ENCODE measurements at regions of chr6 and their contacts with region 1.

Region 1: DNA sequence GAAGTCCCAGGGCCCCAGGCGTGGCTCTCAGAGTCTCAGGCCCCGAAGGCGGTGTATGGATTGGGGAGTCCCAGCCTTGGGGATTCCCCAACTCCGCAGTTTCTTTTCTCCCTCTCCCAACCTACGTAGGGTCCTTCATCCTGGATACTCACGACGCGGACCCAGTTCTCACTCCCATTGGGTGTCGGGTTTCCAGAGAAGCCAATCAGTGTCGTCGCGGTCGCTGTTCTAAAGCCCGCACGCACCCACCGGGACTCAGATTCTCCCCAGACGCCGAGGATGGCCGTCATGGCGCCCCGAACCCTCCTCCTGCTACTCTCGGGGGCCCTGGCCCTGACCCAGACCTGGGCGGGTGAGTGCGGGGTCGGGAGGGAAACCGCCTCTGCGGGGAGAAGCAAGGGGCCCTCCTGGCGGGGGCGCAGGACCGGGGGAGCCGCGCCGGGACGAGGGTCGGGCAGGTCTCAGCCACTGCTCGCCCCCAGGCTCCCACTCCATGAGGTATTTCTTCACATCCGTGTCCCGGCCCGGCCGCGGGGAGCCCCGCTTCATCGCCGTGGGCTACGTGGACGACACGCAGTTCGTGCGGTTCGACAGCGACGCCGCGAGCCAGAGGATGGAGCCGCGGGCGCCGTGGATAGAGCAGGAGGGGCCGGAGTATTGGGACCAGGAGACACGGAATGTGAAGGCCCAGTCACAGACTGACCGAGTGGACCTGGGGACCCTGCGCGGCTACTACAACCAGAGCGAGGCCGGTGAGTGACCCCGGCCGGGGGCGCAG is at the start of gene HLA-A:
- DNase-seq: peak; percentile 98
- H3K4me3 ChIP-seq: peak within 1 kb of the TSS; percentile 48 to 76 (median 62)
- H3K27ac ChIP-seq: peak within 1 kb of the TSS; percentile 78 to 90 (median 88)
- H3K4me1 ChIP-seq: peaks cover 0 to 13% (median 2%) of the 10 kb centered on the region in 4 donors
- H3K27me3 ChIP-seq: no peaks in the 10 kb centered on the region
- CTCF ChIP-seq: no peak
- EP300 ChIP-seq: no peak
- POLR2A ChIP-seq: peak; percentile 91
- total RNA-seq, gene HLA-A: 279 to 524 (median 398) TPM

Region 2: DNA sequence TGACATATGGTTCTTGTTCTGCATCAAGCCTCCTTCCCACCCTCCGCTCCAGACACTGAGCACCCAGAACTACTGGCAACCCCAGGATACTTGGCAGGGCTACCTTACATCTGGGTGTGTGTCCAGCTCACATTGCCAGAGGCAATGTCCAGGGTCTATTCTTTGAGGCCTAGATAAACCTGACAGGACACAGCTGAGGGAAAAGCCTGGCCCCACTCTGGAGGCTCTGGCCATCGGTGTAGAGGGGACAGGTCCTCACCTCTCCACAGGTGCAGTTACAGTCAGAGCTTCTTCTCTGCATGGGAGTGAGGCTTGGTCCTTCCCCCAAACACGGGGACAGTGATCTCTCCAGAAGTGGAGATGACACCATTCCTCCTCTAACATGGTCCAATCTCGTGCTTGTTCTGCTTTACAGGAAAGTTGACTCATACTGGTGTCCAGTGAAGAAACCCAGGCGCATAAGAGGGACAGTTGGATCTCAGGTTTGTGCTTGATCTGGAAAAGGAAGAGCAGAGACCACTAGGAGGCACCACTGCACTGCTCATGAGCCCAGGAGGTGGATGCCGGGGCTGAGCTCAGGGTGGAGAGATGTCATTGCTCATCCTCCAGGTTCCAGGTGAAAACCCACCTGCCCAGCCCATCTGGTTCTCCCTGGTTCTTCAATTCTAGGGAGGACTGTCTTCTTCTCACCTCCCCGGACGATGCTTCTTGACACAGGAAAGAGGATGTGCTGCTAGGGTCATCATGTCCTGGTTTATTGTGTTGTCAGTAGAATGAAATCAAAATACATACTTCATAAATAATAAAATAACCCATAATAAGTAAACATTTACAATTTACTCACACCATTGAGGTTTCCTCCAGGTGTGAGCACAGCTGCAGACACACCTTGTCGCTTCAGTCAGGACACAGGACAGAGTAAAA is 204.5 kb before region 1 on chr6:
- intact Hi-C with region 1: loop called (anchors 10 kb)
- DNase-seq: peak; percentile 84
- H3K4me3 ChIP-seq: no peak overlapping the region
- H3K27ac ChIP-seq: no peak overlapping the region
- H3K4me1 ChIP-seq: no peaks in the 10 kb centered on the region
- H3K27me3 ChIP-seq: no peaks in the 10 kb centered on the region
- CTCF ChIP-seq: peak; percentile 60 to 76 (median 62)
- EP300 ChIP-seq: no peak
- POLR2A ChIP-seq: no peak

Region 3: DNA sequence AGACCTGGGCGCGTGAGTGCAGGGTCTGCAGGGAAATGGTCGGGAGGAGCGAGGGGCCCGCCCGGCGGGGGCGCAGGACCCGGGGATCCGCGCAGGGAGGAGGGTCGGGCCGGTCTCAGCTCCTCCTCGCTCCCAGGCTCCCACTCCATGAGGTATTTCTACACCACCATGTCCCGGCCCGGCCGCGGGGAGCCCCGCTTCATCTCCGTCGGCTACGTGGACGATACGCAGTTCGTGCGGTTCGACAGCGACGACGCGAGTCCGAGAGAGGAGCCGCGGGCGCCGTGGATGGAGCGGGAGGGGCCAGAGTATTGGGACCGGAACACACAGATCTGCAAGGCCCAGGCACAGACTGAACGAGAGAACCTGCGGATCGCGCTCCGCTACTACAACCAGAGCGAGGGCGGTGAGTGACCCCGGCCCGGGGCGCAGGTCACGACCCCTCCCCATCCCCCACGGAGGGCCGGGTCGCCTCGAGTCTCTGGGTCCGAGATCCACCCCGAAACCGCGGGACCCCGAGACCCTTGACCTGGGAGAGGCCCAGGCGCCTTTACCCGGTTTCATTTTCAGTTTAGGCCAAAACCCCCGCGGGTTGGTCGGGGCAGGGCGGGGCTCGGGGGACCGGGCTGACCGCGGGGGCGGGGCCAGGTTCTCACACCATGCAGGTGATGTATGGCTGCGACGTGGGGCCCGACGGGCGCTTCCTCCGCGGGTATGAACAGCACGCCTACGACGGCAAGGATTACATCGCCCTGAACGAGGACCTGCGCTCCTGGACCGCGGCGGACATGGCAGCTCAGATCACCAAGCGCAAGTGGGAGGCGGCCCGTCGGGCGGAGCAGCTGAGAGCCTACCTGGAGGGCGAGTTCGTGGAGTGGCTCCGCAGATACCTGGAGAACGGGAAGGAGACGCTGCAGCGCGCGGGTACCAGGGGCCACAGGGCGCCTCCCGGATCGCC is 54.4 kb before region 1 on chr6:
- intact Hi-C with region 1: loop called (anchors 1 kb)
- DNase-seq: peak; percentile 92
- H3K4me3 ChIP-seq: peak overlapping the region in 3 of 4 donors; percentile 45 to 62 (median 56)
- H3K27ac ChIP-seq: peak overlapping the region in 3 of 4 donors; percentile 84 to 91 (median 88)
- H3K4me1 ChIP-seq: peaks cover 0 to 3% (median 0%) of the 10 kb centered on the region in 4 donors
- H3K27me3 ChIP-seq: no peaks in the 10 kb centered on the region
- CTCF ChIP-seq: no peak
- EP300 ChIP-seq: no peak
- POLR2A ChIP-seq: no peak

Region 4: DNA sequence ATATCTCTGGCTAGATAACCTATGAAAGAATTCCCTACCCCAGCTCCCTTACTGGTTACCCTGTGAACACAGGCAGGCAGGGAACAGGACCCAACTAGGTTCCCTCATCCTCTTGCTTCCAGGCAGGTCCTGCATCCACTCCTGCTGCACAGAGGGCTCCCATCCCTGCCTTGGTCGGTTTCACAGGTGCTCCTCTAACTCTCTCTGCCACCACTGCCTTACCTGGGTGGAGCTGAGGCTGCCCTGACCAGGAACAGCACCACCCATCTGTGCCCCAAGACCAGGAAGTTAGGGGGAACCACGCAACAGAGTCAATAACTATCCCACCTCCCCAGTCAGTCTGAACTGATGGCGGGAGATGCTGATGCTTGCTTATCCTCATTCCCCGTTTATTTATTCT is 37.2 kb before region 1 on chr6:
- intact Hi-C with region 1: no loop called
- DNase-seq: no peak
- H3K4me3 ChIP-seq: no peak overlapping the region
- H3K27ac ChIP-seq: no peak overlapping the region
- H3K4me1 ChIP-seq: no peaks in the 10 kb centered on the region
- H3K27me3 ChIP-seq: no peaks in the 10 kb centered on the region
- CTCF ChIP-seq: no peak
- EP300 ChIP-seq: no peak
- POLR2A ChIP-seq: no peak

Region 5: DNA sequence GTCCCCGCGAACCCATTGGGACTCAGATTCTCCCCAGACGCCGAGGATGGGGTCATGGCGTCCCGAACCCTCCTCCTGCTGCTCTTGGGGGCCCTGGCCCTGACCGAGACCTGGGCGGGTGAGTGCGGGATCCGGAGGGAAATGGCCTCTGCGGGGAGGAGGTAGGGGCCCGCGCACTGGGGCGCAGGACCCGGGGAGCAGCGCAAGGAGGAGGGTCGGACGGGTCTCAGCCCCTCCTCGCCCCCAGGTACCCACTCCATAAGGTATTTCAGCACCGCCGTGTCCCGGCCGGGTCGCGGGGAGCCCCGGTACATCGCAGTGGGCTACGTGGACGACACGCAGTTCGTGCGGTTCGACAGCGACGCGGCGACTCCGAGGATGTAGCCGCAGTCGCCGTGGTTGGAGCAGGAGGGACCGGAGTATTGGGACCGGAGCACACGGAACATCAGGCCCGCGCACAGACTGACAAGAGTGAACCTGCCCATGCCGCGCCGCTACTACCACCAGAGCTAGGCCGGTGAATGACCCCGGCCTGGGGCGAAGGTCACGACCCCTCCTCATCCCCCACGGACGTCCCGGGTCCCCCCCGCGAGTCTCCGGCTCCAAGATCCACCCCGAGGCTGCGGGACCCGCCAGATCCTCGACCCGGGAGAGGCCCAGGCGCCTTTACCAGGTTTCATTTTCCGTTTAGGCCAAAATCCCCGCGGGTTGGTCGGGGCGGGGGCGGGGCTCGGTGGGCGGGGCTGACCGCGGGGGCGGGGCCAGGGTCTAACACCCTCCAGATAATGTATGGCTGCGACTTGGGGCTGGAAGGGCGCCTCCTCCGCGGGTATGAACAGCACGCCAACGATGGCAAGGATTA is 15.8 kb before region 1 on chr6:
- intact Hi-C with region 1: loop called (anchors 2 kb)
- DNase-seq: peak; percentile 81
- H3K4me3 ChIP-seq: peak overlapping the region in 3 of 4 donors; percentile 48 to 69 (median 53)
- H3K27ac ChIP-seq: peak overlapping the region in 3 of 4 donors; percentile 82 to 86 (median 84)
- H3K4me1 ChIP-seq: peaks cover 0 to 4% (median 0%) of the 10 kb centered on the region in 4 donors
- H3K27me3 ChIP-seq: no peaks in the 10 kb centered on the region
- CTCF ChIP-seq: no peak
- EP300 ChIP-seq: no peak
- POLR2A ChIP-seq: peak; percentile 9 to 39

Region 6: DNA sequence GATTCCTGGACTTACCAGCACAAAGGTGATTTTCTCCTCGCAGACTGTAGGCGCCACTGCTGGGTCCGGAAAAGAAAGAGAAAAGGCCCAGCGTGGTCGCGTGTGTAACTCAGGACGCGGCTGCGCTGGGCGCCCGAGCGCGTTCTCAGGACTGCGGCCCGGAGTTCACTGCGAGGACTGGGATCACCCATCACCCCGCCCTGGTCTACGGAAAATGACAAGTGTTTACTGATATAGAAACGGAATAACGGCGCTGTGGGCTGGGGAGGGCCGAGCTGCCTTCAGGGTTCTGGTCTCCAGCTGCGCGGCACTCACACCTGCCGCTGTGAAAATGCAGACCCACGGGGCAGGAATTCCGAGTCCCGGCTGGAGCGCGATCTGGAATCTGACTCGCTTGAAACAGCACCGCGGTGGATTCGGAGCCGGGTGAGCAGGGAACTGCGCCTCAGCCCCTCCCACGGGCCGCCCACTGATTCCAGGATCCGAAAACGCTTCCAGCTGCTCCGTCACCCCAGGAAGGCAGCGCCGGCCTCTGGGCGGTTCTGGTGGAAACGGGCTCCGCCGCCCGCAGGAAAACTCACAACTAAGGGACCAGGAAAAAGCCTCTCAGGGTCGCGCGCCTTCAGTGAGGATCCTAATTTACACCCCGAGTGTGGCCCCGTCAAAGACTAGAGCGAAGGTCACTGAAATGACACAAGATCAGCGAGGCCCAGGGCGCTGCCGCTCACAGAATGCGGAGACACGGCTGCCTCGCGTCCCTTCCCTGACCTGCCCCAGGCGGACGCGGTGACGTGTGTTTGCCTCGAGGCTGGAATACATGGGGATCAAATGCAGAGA is 34.3 kb after region 1 on chr6:
- intact Hi-C with region 1: loop called (anchors 1 kb)
- DNase-seq: peak; percentile 92
- H3K4me3 ChIP-seq: peak overlapping the region; percentile 26 to 58 (median 54)
- H3K27ac ChIP-seq: peak overlapping the region; percentile 89 to 97 (median 93)
- H3K4me1 ChIP-seq: peaks cover 0 to 27% (median 24%) of the 10 kb centered on the region in 4 donors
- H3K27me3 ChIP-seq: no peaks in the 10 kb centered on the region
- CTCF ChIP-seq: peak in 3 of 4 experiments; percentile 16 to 34 (median 18)
- EP300 ChIP-seq: no peak
- POLR2A ChIP-seq: peak; percentile 59 to 62

Region 7: DNA sequence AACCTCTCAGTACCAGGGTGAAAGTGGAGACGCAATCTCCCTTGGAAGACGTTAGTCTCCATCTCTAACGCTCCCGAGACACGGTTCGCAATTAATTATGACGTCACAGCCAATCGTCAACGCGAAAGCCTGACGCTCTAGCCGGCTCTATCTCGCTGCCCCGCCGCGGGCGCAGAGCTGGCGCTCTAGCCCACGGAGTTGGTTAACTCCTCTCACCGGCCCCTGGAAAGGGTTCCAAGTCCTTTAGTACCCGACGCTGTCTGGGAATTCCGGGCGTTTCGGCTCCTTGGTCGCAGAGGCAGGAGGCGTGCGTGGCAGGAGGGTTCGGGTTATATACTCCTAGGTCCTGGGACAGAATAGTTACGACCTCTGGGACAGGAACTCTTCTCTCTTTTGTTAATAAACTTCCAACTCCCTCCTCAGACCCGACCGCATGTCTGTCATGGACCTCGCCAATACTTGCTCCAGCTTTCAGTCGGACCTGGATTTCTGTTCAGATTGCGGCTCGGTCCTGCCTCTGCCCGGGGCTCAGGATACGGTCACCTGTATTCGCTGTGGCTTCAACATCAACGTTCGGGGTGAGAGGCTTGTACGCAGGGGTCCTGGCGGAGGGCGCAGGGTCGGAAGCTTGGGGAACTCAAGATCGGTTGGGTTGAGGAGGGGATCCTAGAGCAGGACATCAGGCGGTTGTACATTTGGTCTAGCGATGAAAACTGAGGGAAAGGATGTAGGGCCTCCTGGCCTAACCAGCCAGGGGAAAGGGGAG is 118.8 kb after region 1 on chr6 and contains the start of gene POLR1H:
- intact Hi-C with region 1: loop called (anchors 5 kb)
- DNase-seq: peak; percentile 97
- H3K4me3 ChIP-seq: peak within 1 kb of the TSS; percentile 71 to 91 (median 84)
- H3K27ac ChIP-seq: peak within 1 kb of the TSS; percentile 85 to 94 (median 89)
- H3K4me1 ChIP-seq: peaks cover 0 to 32% (median 30%) of the 10 kb centered on the region in 4 donors
- H3K27me3 ChIP-seq: no peaks in the 10 kb centered on the region
- CTCF ChIP-seq: no peak
- EP300 ChIP-seq: no peak
- POLR2A ChIP-seq: peak; percentile 89
- total RNA-seq, gene POLR1H: 11.1 to 29.3 (median 23.3) TPM

Region 8: GRCh38 chr6:30272017-30272416 is 329.6 kb after region 1 on chr6:
- intact Hi-C with region 1: no loop called
- DNase-seq: no peak
- H3K4me3 ChIP-seq: no peak overlapping the region
- H3K27ac ChIP-seq: no peak overlapping the region
- H3K4me1 ChIP-seq: no peaks in the 10 kb centered on the region
- H3K27me3 ChIP-seq: no peaks in the 10 kb centered on the region
- CTCF ChIP-seq: no peak
- EP300 ChIP-seq: no peak
- POLR2A ChIP-seq: no peak